Psoas muscle (tissue), 8 donors: ENCODE measurements at regions of chr22 and their contacts with region 1.

Region 1: GRCh38 chr22:21938071-21938822 is 14.4 kb downstream of the PPM1F start:
- DNase-seq: peak; percentile 94 to 98
- ATAC-seq: peak; percentile 86 to 95 (median 92)
- H3K4me3 ChIP-seq: peak overlapping the region; percentile 59
- H3K27ac ChIP-seq: peak overlapping the region; percentile 84
- H3K4me1 ChIP-seq: peaks cover 35% of the 10 kb centered on the region
- H3K27me3 ChIP-seq: no peaks in the 10 kb centered on the region
- CTCF ChIP-seq: peak; percentile 100

Region 2: DNA sequence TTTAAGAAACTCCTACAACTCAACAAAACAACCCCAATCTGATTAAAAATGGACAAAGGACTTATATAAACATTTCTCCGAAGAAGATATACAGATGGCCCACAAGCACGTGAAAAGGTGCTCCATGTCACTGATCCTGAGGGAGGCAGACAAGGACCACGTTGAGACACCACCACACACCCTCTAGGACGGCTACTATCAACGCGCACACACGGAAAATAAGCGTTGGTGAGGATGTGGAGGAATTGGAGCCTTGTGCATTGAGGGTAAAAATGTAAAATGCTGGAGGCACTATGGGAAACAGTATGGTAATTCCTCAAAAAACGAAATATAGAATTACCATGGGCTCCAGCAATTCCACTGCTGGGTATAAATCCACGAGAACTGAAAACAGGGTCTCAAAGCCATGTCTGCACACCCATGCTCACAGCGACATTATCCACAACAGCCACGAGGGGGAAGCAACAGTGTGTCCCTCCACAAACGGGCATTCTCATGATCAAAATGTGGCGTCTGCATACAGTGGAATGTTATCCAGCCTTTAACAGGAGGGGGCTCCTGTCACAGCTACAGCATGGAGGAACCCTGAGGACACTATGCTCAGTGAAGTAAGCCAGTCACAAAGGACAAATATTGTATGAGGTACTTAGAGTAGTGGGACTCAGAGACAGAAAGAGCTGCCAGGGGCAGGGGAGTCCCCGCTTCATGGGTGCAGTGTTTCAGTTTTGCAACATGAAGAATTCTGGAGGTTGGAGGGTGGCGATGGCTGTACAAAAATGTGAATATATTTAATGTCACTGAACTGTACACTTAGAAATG is 225.1 kb before region 1 on chr22:
- intact Hi-C with region 1: loop called (anchors 5 kb)
- DNase-seq: peak; percentile 58 to 72
- ATAC-seq: peak; percentile 58 to 86 (median 78)
- H3K4me3 ChIP-seq: no peak overlapping the region
- H3K27ac ChIP-seq: peak overlapping the region; percentile 83
- H3K4me1 ChIP-seq: peaks cover 40% of the 10 kb centered on the region
- H3K27me3 ChIP-seq: no peaks in the 10 kb centered on the region
- CTCF ChIP-seq: peak; percentile 74

Region 3: DNA sequence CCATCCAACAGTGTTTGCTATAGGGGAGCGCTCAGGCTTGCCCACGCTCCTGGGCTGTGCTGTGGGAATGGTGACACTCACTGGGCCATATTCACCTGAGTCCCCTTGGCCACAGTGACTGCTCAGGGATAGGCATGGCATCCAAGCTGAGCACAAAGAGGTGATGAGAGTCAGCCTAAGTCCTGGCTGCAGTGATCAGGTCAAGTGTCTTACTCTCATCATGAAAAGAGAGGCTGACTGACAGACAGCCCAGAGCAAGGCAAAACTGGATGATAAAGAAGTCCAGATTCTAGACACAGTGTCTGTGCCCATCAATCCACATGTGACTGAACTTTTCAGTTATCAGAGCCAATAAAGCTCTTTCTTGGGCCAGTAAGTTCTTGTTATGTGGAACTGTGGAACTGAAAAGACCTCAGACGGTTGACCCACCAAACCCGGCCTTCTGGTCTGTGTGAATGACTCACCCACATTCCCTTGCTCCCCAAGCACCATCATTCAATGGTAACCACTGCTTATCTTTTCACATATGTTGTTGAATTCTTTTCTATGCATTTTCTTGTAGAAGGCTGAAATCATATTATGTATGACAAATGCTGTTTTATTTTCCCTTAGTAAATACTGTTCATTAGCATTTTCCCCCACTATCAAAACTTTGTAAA is 159.4 kb before region 1 on chr22:
- intact Hi-C with region 1: loop called in 1 of 2 experiments (anchors 5 kb)
- DNase-seq: no peak
- ATAC-seq: no peak
- H3K4me3 ChIP-seq: no peak overlapping the region
- H3K27ac ChIP-seq: no peak overlapping the region
- H3K4me1 ChIP-seq: peaks cover 6% of the 10 kb centered on the region
- H3K27me3 ChIP-seq: no peaks in the 10 kb centered on the region
- CTCF ChIP-seq: no peak

Region 4: DNA sequence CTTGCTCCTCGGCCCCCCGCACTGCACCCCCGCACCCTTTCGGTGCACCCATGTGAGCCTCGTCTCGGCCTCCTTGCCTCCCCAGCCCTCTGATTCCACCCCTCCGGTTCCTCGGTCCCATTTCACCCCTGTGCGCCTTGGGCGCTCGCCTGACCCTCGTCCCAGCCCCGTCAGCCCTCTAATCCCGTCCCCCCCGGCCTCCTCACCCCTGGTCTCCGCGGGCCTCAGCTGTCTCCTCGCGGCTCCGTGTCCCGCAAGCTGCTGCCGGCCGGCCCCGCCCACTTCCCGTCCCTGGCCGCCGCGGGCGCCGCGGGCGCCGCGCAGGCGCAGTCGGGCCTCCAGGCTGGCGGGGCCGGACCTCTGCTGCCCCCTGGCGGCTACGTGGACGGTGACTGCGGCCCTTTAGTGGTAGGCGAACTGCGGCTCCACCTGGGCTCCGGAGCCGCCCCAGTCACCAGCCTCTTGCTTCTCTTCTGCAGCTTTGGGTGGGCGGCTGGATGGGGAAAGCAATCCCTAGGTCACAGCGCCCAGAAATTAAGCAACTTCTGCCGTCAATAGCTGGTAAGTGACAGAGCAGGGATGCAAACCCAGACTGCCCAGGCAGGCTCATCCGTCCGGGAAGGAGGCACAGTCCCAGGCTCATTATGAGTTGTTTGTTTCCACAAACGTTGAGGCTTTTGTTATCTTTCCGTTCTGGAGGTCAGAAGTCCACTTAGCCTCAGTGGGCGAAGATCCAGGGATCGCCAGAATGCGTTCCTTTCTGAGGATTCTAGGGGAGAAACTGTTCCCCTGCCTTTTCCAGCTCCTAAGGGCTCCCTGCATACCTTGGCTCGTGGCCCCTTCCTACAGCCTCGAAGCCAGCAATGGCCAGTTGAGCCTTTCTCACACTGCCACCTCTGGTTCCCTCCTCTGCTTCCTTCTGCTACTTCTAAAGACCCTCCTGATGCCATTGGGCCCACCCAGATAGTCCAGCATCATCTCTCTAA is 14.6 kb after region 1 on chr22 and contains the start of gene PPM1F:
- intact Hi-C with region 1: loop called (anchors 2 kb)
- DNase-seq: peak; percentile 88 to 93
- ATAC-seq: peak; percentile 88 to 94 (median 92)
- H3K4me3 ChIP-seq: peak within 1 kb of the TSS; percentile 74
- H3K27ac ChIP-seq: peak within 1 kb of the TSS; percentile 76
- H3K4me1 ChIP-seq: peaks cover 26% of the 10 kb centered on the region
- H3K27me3 ChIP-seq: no peaks in the 10 kb centered on the region
- CTCF ChIP-seq: peak; percentile 92
- total RNA-seq, gene PPM1F: 11.9 to 29.5 (median 15.7) TPM